CD4-positive, alpha-beta T cell (primary cell): ENCODE measurements at regions of chr4 and their contacts with region 1.

Region 1: GRCh38 chr4:152545088-152545487 is 9.2 kb upstream of the FBXW7 start:
- DNase-seq: no peak
- ATAC-seq: no peak
- H3K4me3 ChIP-seq: no peak overlapping the region
- H3K4me3 Mint-ChIP-seq: no peak overlapping the region
- H3K27ac ChIP-seq: no peak overlapping the region
- H3K27ac Mint-ChIP-seq: peak overlapping the region; percentile 79
- H3K4me1 ChIP-seq: peaks cover 26% of the 10 kb centered on the region
- H3K4me1 Mint-ChIP-seq: peaks cover 33% of the 10 kb centered on the region
- H3K27me3 ChIP-seq: no peaks in the 10 kb centered on the region
- H3K27me3 Mint-ChIP-seq: no peaks in the 10 kb centered on the region
- CTCF ChIP-seq: no peak

Region 2: GRCh38 chr4:152304220-152304619 is 240.9 kb before region 1 on chr4:
- CTCF ChIA-PET with region 1: no interaction called
- POLR2A ChIA-PET with region 1: no interaction called
- intact Hi-C with region 1: no loop called
- DNase-seq: no peak
- ATAC-seq: no peak
- H3K4me3 ChIP-seq: no peak overlapping the region
- H3K4me3 Mint-ChIP-seq: no peak overlapping the region
- H3K27ac ChIP-seq: no peak overlapping the region
- H3K27ac Mint-ChIP-seq: no peak overlapping the region
- H3K4me1 ChIP-seq: no peaks in the 10 kb centered on the region
- H3K4me1 Mint-ChIP-seq: no peaks in the 10 kb centered on the region
- H3K27me3 ChIP-seq: no peaks in the 10 kb centered on the region
- H3K27me3 Mint-ChIP-seq: no peaks in the 10 kb centered on the region
- CTCF ChIP-seq: no peak

Region 3: DNA sequence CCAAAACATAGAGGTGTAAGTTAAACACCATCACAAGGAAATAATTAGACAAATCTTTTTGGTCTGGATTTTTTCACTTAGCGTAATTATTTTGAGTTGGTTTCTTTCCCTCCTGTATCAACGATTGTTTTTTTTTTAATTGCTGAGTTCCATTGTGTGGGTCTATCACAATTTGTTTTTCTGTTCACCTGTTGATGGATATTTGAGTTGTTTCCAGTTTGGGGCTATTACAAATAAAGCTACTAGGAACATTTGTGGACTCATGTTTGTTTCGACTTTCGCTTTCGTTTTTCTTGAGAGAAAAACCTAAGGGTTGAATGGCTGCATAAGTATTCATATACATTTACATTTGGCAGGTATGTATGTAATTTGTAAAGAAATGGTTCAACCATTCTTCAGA is 11.2 kb after region 1 on chr4:
- CTCF ChIA-PET with region 1: interaction called, 7 read pairs
- POLR2A ChIA-PET with region 1: interaction called, 15 read pairs
- intact Hi-C with region 1: no loop called
- DNase-seq: peak in 3 of 14 experiments; percentile 29 to 62 (median 29)
- ATAC-seq: no peak
- H3K4me3 ChIP-seq: peak overlapping the region; percentile 6
- H3K4me3 Mint-ChIP-seq: peak overlapping the region; percentile 48
- H3K27ac ChIP-seq: no peak overlapping the region
- H3K27ac Mint-ChIP-seq: peak overlapping the region; percentile 77
- H3K4me1 ChIP-seq: peaks cover 32% of the 10 kb centered on the region
- H3K4me1 Mint-ChIP-seq: peaks cover 44% of the 10 kb centered on the region
- H3K27me3 ChIP-seq: no peaks in the 10 kb centered on the region
- H3K27me3 Mint-ChIP-seq: no peaks in the 10 kb centered on the region
- CTCF ChIP-seq: no peak